ENCODE measurements at regions of chr5 and their contacts with region 1.

Region 1: DNA sequence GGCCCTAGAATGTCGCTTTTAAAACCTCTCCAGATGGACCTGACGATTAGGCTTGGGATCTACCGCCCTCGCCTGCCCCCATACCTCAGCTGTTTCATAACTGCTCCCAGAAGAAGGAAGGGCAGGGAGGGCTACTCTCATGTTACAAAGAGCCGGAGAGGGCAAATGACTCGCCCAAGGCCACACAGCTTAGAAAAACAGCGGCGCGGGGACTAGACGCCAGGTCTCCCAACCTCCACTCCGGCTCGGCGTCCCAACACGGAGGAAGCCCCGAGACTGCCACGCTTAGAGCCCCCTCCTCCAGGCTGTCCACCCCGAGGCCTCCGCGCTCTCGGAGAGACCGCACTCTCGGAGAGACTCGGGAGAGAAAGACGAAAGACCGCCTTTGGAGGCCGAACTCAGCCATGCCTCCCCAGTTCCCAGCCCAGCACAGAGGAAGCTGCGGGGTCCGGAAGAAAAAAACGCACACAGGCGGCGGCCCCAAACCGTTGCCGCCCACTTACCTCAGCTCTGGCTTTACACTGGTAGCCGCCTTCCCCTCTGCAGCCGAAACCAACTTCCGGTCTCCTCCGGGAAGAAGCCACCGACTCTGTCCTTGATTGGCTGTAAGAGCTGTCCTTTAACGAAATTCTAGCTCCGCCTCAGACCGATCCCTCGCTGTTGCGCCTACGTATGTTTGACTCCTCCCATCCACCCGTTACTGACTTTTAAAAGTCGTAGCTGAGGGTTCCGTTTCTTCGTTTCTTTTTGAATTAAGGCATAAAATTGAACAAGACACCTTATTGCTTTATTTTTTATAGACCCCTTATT is at the start of gene MED7:
- DNase-seq: peak; percentile 94 to 98 (median 97)
- H3K4me3 ChIP-seq: peak within 1 kb of the TSS; percentile 92 to 94
- H3K4me3 Mint-ChIP-seq: peak within 1 kb of the TSS; percentile 94 to 100 (median 98)
- H3K27ac ChIP-seq: peak within 1 kb of the TSS; percentile 98
- H3K27ac Mint-ChIP-seq: peak within 1 kb of the TSS; percentile 94 to 100 (median 99)
- H3K4me1 ChIP-seq: peaks cover 28% of the 10 kb centered on the region
- H3K4me1 Mint-ChIP-seq: peaks cover 29 to 61% (median 39%) of the 10 kb centered on the region in 4 donors
- H3K27me3 ChIP-seq: no peaks in the 10 kb centered on the region
- H3K27me3 Mint-ChIP-seq: no peaks in the 10 kb centered on the region
- total RNA-seq, gene MED7: 18.9 to 20.3 TPM

Region 2: GRCh38 chr5:156913719-156914370 is 228.7 kb before region 1 on chr5:
- CTCF ChIA-PET with region 1: no interaction called
- POLR2A ChIA-PET with region 1: interaction called, 14 read pairs
- intact Hi-C with region 1: no loop called
- DNase-seq: peak; percentile 34 to 43 (median 36)
- H3K4me3 ChIP-seq: peak overlapping the region in 1 of 2 donors; percentile 18
- H3K4me3 Mint-ChIP-seq: peak overlapping the region; percentile 76 to 90 (median 80)
- H3K27ac ChIP-seq: peak overlapping the region; percentile 36
- H3K27ac Mint-ChIP-seq: peak overlapping the region; percentile 82 to 95 (median 92)
- H3K4me1 ChIP-seq: peaks cover 28% of the 10 kb centered on the region
- H3K4me1 Mint-ChIP-seq: peaks cover 24 to 52% (median 38%) of the 10 kb centered on the region in 4 donors
- H3K27me3 ChIP-seq: no peaks in the 10 kb centered on the region
- H3K27me3 Mint-ChIP-seq: no peaks in the 10 kb centered on the region

Region 3: DNA sequence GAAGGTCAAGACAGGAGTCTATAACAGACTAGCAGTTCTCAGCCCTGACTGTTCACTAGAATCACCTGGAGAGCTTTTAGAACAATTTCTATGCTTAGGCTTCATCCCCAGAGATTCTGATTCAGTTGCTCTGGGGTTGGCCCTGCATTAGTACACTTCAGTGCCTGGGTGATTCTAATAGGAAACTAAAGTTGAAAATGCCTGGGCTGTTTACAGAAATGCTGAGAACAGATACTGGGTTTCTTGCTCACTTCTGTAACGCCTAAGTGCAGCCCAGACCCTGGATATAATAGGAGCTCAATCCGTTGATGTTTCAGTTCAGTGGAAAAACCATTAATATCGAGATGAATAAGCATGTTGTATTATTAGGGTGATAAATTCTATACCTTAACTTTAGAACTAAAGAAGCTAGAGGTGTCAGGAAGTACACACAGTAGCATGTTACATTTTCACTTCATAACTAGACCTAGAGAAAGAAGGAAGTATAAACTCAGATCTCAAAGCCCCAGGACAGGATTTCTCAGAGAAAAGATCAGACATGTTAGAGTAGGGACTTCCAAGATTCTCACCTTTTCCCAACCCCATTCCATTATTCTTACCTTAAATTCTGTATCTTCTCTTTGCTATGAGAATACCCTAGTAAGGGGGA is 54.1 kb before region 1 on chr5:
- CTCF ChIA-PET with region 1: no interaction called
- POLR2A ChIA-PET with region 1: no interaction called
- intact Hi-C with region 1: no loop called
- DNase-seq: no peak
- H3K4me3 ChIP-seq: no peak overlapping the region
- H3K4me3 Mint-ChIP-seq: no peak overlapping the region
- H3K27ac ChIP-seq: no peak overlapping the region
- H3K27ac Mint-ChIP-seq: peak overlapping the region in 1 of 7 donors; percentile 46
- H3K4me1 ChIP-seq: no peaks in the 10 kb centered on the region
- H3K4me1 Mint-ChIP-seq: no peaks in the 10 kb centered on the region
- H3K27me3 ChIP-seq: no peaks in the 10 kb centered on the region
- H3K27me3 Mint-ChIP-seq: no peaks in the 10 kb centered on the region

Region 4: GRCh38 chr5:157159209-157159751 is 16.8 kb after region 1 on chr5:
- CTCF ChIA-PET with region 1: no interaction called
- POLR2A ChIA-PET with region 1: interaction called, 28 read pairs
- intact Hi-C with region 1: no loop called
- DNase-seq: peak; percentile 74 to 87 (median 81)
- H3K4me3 ChIP-seq: peak overlapping the region in 1 of 2 donors; percentile 31
- H3K4me3 Mint-ChIP-seq: peak overlapping the region in 7 of 8 donors; percentile 51 to 75 (median 65)
- H3K27ac ChIP-seq: peak overlapping the region; percentile 88
- H3K27ac Mint-ChIP-seq: peak overlapping the region; percentile 91 to 99 (median 98)
- H3K4me1 ChIP-seq: peaks cover 74% of the 10 kb centered on the region
- H3K4me1 Mint-ChIP-seq: peaks cover 57 to 91% (median 73%) of the 10 kb centered on the region in 4 donors
- H3K27me3 ChIP-seq: no peaks in the 10 kb centered on the region
- H3K27me3 Mint-ChIP-seq: no peaks in the 10 kb centered on the region

Region 5: DNA sequence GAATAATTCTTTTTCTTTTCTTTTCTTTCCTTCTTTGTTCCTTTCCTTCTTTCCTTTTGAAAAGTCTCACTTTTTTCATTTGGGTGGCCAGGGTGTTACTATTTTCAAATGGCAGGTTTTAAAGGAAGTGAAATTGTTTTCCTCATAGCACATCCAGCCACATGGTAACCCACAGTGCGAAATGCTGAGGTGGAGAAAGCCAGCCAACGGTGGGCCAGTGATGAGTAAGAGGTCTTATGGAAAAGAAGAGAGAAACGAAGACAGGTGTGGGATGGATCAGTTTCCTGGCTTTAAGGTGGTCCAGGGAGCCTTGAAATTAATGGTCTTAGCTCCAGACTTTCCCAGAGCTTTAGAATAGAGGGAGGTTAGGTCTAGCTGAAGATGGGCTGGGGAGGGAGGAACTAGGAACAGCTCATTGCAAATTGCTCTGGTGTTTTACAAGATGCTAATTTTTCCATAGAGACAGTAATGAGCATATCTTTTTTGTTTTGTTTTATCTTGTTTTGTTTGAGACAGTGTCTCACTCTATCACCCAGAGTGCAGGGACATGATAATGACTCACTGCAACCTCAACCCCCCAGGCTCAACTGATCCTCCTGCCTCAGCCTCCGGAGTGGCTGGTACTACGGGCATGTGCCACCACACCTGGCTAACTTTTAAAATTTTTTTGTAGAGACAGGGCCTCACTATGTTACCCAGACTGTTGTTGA is 55.9 kb after region 1 on chr5:
- CTCF ChIA-PET with region 1: interaction called, 66 read pairs
- POLR2A ChIA-PET with region 1: interaction called, 16 read pairs
- intact Hi-C with region 1: no loop called
- DNase-seq: peak in 1 of 5 donors; percentile 91
- H3K4me3 ChIP-seq: peak overlapping the region in 1 of 2 donors; percentile 19
- H3K4me3 Mint-ChIP-seq: peak overlapping the region; percentile 68 to 86 (median 72)
- H3K27ac ChIP-seq: peak overlapping the region; percentile 64
- H3K27ac Mint-ChIP-seq: peak overlapping the region; percentile 84 to 96 (median 92)
- H3K4me1 ChIP-seq: peaks cover 99% of the 10 kb centered on the region
- H3K4me1 Mint-ChIP-seq: peaks cover 73 to 96% (median 84%) of the 10 kb centered on the region in 4 donors
- H3K27me3 ChIP-seq: no peaks in the 10 kb centered on the region
- H3K27me3 Mint-ChIP-seq: no peaks in the 10 kb centered on the region

Region 6: DNA sequence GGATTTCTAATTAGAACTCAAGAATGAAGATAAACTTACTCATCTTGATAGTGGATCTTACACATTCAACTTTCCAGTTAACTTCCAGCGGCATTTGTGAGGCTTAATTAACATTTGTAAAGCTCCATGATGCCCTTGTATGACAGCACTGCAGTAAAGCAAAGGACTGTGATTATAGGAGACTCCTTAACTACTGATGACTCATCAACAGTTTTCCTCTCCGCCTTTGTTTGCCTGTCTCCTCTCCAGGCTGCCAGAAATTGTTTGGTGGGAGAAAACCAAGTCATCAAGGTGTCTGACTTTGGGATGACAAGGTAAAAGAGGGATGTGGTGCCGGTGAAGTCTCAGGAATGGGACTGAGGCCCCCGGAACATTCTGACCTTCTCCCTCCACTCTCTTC is 103.0 kb after region 1 on chr5:
- CTCF ChIA-PET with region 1: interaction called, 99 read pairs
- POLR2A ChIA-PET with region 1: interaction called, 25 read pairs
- intact Hi-C with region 1: no loop called
- DNase-seq: no peak
- H3K4me3 ChIP-seq: no peak overlapping the region
- H3K4me3 Mint-ChIP-seq: peak overlapping the region in 2 of 8 donors; percentile 17
- H3K27ac ChIP-seq: peak overlapping the region; percentile 1
- H3K27ac Mint-ChIP-seq: peak overlapping the region; percentile 43 to 95 (median 76)
- H3K4me1 ChIP-seq: peaks cover 90% of the 10 kb centered on the region
- H3K4me1 Mint-ChIP-seq: peaks cover 55 to 84% (median 68%) of the 10 kb centered on the region in 4 donors
- H3K27me3 ChIP-seq: no peaks in the 10 kb centered on the region
- H3K27me3 Mint-ChIP-seq: no peaks in the 10 kb centered on the region

Region 7: GRCh38 chr5:157271740-157272271 is 129.3 kb after region 1 on chr5:
- CTCF ChIA-PET with region 1: interaction called, 4 read pairs
- POLR2A ChIA-PET with region 1: interaction called, 49 read pairs
- intact Hi-C with region 1: loop called (anchors 2 kb)
- DNase-seq: peak; percentile 89 to 96 (median 93)
- H3K4me3 ChIP-seq: peak overlapping the region in 1 of 2 donors; percentile 33
- H3K4me3 Mint-ChIP-seq: peak overlapping the region; percentile 77 to 97 (median 86)
- H3K27ac ChIP-seq: peak overlapping the region; percentile 69
- H3K27ac Mint-ChIP-seq: peak overlapping the region; percentile 96 to 100 (median 98)
- H3K4me1 ChIP-seq: peaks cover 99% of the 10 kb centered on the region
- H3K4me1 Mint-ChIP-seq: peaks cover 73 to 96% (median 83%) of the 10 kb centered on the region in 4 donors
- H3K27me3 ChIP-seq: no peaks in the 10 kb centered on the region
- H3K27me3 Mint-ChIP-seq: no peaks in the 10 kb centered on the region

Region 8: DNA sequence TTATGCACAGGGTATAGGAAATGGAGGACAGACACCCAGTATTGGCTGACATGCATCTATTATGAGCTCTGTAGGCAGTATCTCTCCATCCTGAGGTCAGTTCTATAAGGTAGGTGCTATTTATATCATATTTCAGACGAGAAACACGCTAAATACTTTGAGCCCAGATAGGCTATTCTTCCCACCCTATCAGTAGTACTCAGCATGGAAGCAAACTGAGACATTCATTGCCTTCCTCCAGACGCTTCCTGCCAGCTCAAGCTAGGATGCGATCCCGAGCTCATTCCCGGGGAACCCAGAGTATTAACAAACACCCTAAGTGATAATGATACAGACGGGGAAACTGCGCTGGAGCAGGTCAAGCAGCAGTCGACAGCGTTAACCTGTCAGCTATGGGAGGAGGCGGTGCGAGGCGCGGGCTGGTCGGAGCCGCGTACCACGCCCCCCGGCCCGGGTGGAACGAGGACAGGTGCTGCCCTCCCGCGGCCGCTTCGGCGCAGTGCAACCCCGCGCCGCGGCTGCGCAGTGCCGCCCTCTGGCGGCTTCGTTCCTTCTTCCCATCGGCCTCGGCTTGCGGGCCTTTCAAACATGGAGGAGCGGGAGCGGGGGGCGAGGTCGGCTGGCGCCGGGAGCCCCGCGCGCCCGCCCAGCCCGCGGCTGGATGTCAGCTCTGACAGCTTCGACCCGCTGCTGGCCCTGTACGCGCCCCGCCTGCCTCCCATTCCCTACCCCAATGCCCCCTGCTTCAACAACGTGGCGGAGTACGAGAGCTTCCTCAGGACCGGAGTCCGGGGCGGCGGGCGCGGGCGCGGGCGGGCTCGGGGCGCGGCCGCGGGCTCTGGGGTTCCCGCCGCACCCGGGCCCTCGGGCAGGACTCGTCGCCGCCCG is 600.9 kb after region 1 on chr5 and contains the start of gene LSM11:
- CTCF ChIA-PET with region 1: interaction called, 5 read pairs
- POLR2A ChIA-PET with region 1: interaction called, 5 read pairs
- intact Hi-C with region 1: loop called (anchors 1 kb)
- DNase-seq: peak; percentile 85 to 94 (median 88)
- H3K4me3 ChIP-seq: peak within 1 kb of the TSS; percentile 50 to 63
- H3K4me3 Mint-ChIP-seq: peak within 1 kb of the TSS; percentile 93 to 98 (median 96)
- H3K27ac ChIP-seq: peak within 1 kb of the TSS; percentile 45
- H3K27ac Mint-ChIP-seq: peak within 1 kb of the TSS; percentile 62 to 96 (median 94)
- H3K4me1 ChIP-seq: peaks cover 18% of the 10 kb centered on the region
- H3K4me1 Mint-ChIP-seq: peaks cover 19 to 34% (median 28%) of the 10 kb centered on the region in 4 donors
- H3K27me3 ChIP-seq: no peaks in the 10 kb centered on the region
- H3K27me3 Mint-ChIP-seq: no peaks in the 10 kb centered on the region
- total RNA-seq, gene LSM11: 4.4 to 4.8 TPM